ENCODE measurements at regions of chr17 and their contacts with region 1.

Region 1: GRCh38 chr17:36978810-36979564 is 30.2 kb downstream of the AATF start:
- DNase-seq: no peak
- H3K4me3 ChIP-seq: no peak overlapping the region
- H3K27ac ChIP-seq: no peak overlapping the region
- H3K4me1 ChIP-seq: no peaks in the 10 kb centered on the region
- H3K27me3 ChIP-seq: no peaks in the 10 kb centered on the region
- CTCF ChIP-seq: no peak
- POLR2A ChIP-seq: no peak

Region 2: GRCh38 chr17:36888236-36888951 is 90.6 kb before region 1 on chr17:
- intact Hi-C with region 1: loop called (anchors 10 kb)
- DNase-seq: no peak
- H3K4me3 ChIP-seq: no peak overlapping the region
- H3K27ac ChIP-seq: no peak overlapping the region
- H3K4me1 ChIP-seq: peaks cover 7% of the 10 kb centered on the region
- H3K27me3 ChIP-seq: no peaks in the 10 kb centered on the region
- CTCF ChIP-seq: no peak
- POLR2A ChIP-seq: no peak

Measured in testis (tissue), 5 donors.